ENCODE measurements at regions of chr16 and their contacts with region 1.

Region 1: GRCh38 chr16:12819126-12820117 is 15.7 kb upstream of the CPPED1 start:
- DNase-seq: peak; percentile 90

Region 2: GRCh38 chr16:12455287-12455798 is 364.1 kb before region 1 on chr16:
- intact Hi-C with region 1: loop called (anchors 5 kb)
- DNase-seq: peak; percentile 88